Psoas muscle (tissue), 8 donors: ENCODE measurements at regions of chr2 and their contacts with region 1.

Region 1: DNA sequence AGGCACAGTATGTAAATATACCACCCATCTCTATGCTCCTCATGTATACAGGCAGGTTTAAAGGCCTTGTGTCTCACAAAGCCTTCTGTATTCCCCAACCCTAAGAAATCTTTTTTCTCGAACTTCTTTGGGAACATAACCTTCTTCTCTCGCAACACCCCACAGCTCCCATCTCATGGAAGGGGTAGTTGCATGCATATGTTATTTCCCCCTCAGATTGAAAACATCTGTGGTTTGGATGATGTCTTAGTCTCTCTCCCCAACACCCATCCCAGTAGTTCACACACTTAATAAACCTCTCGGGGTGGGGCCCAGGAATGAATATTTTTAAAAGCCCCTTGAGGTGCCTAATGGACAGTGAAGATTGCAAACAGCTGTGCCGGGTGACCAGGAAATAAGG is 21.0 kb upstream of the HDAC4 start:
- DNase-seq: no peak
- ATAC-seq: no peak
- H3K4me3 ChIP-seq: no peak overlapping the region
- H3K27ac ChIP-seq: no peak overlapping the region
- H3K4me1 ChIP-seq: no peaks in the 10 kb centered on the region
- H3K27me3 ChIP-seq: peaks cover 0 to 2% (median 0%) of the 10 kb centered on the region in 3 donors
- CTCF ChIP-seq: no peak

Region 2: DNA sequence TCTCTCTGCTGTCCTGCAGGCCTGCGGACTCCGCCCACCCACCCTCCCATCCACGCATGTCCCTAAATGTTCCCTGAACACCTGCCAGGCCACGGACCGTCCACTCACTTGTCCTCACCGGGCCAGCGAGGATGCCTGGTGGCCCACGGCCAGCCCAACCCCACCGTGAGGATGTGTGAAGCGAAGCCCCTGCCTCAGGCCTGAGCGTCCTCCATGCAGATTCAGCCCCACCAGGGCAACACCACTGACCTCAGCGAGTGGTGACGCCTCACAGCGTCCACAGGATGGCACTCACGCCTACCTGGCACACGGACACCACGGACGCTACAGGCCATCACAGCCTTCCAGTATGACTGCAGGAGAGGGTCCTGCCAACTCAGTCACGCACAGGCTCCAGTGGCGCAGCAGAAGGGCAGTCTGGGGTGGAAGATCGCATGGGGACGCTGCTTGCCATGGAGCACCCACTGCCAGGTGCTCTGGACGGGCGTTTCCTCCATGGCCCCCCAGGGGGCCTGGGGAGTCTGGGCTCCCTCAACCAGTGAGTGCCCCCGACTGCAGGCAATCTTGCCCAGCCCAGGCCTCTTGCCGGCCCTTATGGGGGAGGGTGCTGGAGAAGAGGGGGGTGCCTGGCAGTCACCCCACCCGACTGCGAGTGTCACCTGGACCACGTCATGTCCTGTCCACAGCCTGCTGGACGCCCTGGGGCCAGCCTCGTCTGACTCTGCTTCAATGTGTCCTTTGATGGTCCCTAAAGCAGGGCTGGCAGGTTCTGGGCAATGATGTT is 46.4 kb before region 1 on chr2:
- intact Hi-C with region 1: no loop called
- DNase-seq: peak in 1 of 2 donors; percentile 60
- ATAC-seq: peak; percentile 35 to 71 (median 60)
- H3K4me3 ChIP-seq: no peak overlapping the region
- H3K27ac ChIP-seq: no peak overlapping the region
- H3K4me1 ChIP-seq: no peaks in the 10 kb centered on the region
- H3K27me3 ChIP-seq: no peaks in the 10 kb centered on the region
- CTCF ChIP-seq: no peak

Region 3: DNA sequence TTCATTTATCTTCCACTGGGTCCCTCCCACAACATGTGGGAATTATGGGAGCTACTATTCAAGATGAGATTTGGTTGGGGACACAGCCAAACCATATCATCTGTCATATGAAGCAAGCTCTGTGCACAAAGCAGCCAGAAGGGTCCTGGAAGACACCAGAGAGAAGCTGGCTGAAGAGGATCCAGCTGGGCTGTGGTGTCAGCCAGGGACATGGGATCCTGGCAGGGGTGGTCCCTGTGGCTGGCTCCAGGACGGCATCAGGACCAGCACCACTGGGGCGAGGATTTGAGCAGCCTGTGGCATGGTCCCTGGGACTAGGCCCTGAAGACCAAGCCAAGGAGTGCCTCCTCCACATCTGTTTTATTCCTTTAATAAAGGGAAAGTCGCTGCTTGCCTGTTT is 63.8 kb after region 1 on chr2:
- intact Hi-C with region 1: loop called in 1 of 2 experiments (anchors 2 kb)
- DNase-seq: no peak
- ATAC-seq: peak in 3 of 4 donors; percentile 52 to 77 (median 70)
- H3K4me3 ChIP-seq: no peak overlapping the region
- H3K27ac ChIP-seq: no peak overlapping the region
- H3K4me1 ChIP-seq: no peaks in the 10 kb centered on the region
- H3K27me3 ChIP-seq: no peaks in the 10 kb centered on the region
- CTCF ChIP-seq: no peak